Psoas muscle (tissue), 8 donors: ENCODE measurements at regions of chr10 and their contacts with region 1.

Region 1: GRCh38 chr10:69506834-69507721 is 55.8 kb downstream of the TSPAN15 start:
- DNase-seq: no peak
- ATAC-seq: peak in 2 of 4 donors; percentile 12 to 25
- H3K4me3 ChIP-seq: peak overlapping the region; percentile 42
- H3K27ac ChIP-seq: peak overlapping the region; percentile 67
- H3K4me1 ChIP-seq: peaks cover 45% of the 10 kb centered on the region
- H3K27me3 ChIP-seq: no peaks in the 10 kb centered on the region
- CTCF ChIP-seq: no peak

Region 2: DNA sequence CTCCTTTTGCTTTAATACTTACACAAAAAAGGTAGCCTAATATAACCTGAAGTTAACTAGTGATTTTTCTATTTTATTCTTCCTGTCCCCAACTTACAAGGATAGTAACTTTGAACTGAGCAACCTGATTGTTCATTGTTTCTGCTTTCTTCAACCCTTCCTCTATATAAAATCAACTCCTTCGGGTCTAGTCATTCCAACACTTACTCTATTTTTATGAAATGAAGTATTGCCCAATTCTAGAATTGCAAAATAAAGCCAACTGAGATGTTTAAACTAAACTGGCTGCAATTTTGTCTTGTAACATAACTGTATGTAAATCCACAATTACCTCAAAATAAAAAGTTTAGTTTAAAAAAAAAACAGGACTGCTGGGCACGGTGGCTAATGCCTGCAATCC is 1015.0 kb before region 1 on chr10:
- intact Hi-C with region 1: no loop called
- DNase-seq: no peak
- ATAC-seq: no peak
- H3K4me3 ChIP-seq: no peak overlapping the region
- H3K27ac ChIP-seq: no peak overlapping the region
- H3K4me1 ChIP-seq: no peaks in the 10 kb centered on the region
- H3K27me3 ChIP-seq: no peaks in the 10 kb centered on the region
- CTCF ChIP-seq: no peak

Region 3: DNA sequence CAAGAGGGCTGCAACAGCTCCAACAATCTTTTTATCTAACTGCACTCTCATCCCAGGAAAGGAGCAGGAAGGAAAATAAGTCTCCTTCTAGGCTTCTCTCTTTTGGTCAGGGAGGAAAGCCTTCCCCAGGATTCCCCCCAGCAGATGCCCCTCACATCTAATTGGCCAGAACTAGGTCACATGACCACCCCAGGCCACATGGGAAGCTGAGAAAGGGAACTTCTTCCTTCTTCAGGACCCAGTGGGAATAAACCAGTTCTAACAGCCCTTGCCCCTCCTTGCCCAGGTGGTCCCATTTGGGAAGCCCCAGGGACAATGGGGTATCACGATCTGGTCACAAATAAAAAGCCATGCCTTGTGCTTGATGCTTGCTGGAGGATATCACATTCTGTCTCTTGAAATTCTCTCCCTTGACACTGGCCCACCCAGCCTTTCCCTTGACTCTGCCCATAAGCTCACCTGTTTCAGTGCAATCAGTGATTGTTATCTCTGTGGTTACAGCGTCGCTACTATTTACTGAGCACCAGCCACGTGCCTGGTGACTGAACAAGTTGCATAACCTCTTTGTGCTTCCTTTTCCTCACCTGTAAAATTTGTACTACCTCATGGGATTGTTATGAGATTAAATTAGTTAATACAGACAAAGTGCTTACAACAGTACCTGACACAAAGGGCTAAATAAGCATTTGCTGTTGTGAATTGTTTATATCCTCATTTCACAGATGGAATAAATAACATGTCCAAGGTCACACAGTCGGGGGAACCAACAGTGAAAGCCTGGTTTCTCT is 81.4 kb before region 1 on chr10:
- intact Hi-C with region 1: loop called (anchors 1 to 2 kb)
- DNase-seq: no peak
- ATAC-seq: no peak
- H3K4me3 ChIP-seq: no peak overlapping the region
- H3K27ac ChIP-seq: no peak overlapping the region
- H3K4me1 ChIP-seq: peaks cover 11% of the 10 kb centered on the region
- H3K27me3 ChIP-seq: no peaks in the 10 kb centered on the region
- CTCF ChIP-seq: no peak

Region 4: DNA sequence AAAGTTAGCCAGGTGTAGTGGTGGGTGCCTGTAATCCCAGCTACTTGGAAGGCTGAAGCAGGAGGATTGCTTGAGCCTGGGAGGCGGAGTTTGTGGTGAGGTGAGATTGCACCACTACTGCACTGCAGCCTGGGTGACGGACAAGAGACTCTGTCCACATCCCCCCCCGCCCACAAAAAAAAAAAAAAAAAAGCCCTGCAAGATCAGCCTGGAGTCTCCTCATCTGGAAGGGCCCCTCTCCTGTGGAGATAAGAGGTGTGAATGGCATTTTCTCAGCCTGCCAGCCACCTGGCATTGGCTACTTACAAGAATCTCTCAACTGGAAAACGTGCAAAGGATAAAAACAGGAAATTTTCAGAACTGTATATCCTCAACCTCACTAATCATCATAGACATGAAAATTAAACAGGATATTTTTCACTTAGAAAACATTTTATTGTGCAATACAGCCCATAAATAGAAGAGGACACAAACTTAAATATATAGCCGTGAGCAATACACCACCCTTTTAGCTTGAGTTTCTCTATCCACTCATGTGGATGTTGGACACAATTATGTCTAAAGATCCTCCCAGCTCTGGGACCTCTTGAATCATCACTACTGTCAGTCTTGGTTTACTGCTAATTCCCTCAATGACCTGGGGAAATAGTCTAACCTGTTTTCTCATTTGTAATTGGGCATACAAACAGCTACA is 67.1 kb before region 1 on chr10:
- intact Hi-C with region 1: loop called in 1 of 2 experiments (anchors 5 kb)
- DNase-seq: no peak
- ATAC-seq: peak; percentile 61 to 78 (median 76)
- H3K4me3 ChIP-seq: no peak overlapping the region
- H3K27ac ChIP-seq: peak overlapping the region; percentile 81
- H3K4me1 ChIP-seq: peaks cover 24% of the 10 kb centered on the region
- H3K27me3 ChIP-seq: no peaks in the 10 kb centered on the region
- CTCF ChIP-seq: no peak